PC-3 (cell line): ENCODE measurements at regions of chrX and their contacts with region 1.

Region 1: DNA sequence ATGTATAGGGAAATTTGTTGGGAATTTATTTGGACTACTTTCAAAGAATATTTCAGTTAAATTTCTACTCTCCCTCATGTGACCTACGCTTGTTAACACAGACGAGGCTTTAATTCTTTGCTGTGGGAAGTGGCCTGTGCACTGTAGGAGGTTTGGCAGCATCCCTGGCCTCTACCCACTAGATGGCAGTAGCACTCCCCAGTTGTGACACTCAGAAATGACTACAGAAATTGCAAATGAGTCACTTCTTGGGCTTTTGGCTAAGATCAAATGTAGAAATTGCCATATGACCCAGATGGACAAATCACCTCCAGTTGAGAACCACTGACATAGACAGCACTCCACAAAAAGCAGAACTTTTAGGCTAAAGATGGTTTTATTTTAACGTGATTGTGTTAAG is 22.1 kb downstream of the PIR start:
- DNase-seq: peak; percentile 77
- ATAC-seq: peak; percentile 76
- H3K4me3 ChIP-seq: no peak overlapping the region
- H3K27ac ChIP-seq: peak overlapping the region; percentile 9; the same call in 1 of the 2 replicates
- H3K4me1 ChIP-seq: peaks cover 30% of the 10 kb centered on the region
- H3K27me3 ChIP-seq: no peaks in the 10 kb centered on the region
- CTCF ChIP-seq: peak; percentile 80

Region 2: GRCh38 chrX:15299941-15300851 is 170.8 kb before region 1 on chrX:
- CTCF ChIA-PET with region 1: no interaction called
- POLR2A ChIA-PET with region 1: no interaction called
- intact Hi-C with region 1: loop called (anchors 1 kb)
- DNase-seq: peak; percentile 58
- ATAC-seq: no peak; the same call in 1 of the 2 replicates
- H3K4me3 ChIP-seq: no peak overlapping the region
- H3K27ac ChIP-seq: no peak overlapping the region
- H3K4me1 ChIP-seq: no peaks in the 10 kb centered on the region
- H3K27me3 ChIP-seq: no peaks in the 10 kb centered on the region
- CTCF ChIP-seq: peak; percentile 71

Region 3: DNA sequence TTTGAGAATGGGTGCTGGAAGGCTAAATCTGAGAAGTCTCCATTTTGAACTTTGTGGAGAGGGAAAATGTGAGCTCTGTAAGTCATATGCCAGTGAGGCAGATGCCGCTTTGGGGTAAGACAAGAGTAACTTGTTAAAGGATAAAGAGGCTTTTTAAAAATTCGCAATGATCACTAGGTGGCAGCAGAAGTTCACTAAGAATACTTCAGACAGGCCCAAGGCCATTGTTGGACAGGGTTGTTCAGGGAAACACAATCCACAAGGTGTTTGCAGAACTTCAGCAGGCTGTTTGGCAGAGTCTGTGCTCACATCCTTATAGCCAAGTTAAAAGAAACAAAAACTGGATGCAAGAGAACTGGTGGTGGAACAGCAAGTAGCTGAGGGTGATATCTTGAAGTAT is 122.0 kb before region 1 on chrX:
- CTCF ChIA-PET with region 1: no interaction called
- POLR2A ChIA-PET with region 1: no interaction called
- intact Hi-C with region 1: loop called (anchors 1 kb)
- DNase-seq: peak; percentile 83
- ATAC-seq: peak; percentile 81
- H3K4me3 ChIP-seq: no peak overlapping the region
- H3K27ac ChIP-seq: no peak overlapping the region
- H3K4me1 ChIP-seq: no peaks in the 10 kb centered on the region
- H3K27me3 ChIP-seq: no peaks in the 10 kb centered on the region
- CTCF ChIP-seq: peak; percentile 69

Region 4: DNA sequence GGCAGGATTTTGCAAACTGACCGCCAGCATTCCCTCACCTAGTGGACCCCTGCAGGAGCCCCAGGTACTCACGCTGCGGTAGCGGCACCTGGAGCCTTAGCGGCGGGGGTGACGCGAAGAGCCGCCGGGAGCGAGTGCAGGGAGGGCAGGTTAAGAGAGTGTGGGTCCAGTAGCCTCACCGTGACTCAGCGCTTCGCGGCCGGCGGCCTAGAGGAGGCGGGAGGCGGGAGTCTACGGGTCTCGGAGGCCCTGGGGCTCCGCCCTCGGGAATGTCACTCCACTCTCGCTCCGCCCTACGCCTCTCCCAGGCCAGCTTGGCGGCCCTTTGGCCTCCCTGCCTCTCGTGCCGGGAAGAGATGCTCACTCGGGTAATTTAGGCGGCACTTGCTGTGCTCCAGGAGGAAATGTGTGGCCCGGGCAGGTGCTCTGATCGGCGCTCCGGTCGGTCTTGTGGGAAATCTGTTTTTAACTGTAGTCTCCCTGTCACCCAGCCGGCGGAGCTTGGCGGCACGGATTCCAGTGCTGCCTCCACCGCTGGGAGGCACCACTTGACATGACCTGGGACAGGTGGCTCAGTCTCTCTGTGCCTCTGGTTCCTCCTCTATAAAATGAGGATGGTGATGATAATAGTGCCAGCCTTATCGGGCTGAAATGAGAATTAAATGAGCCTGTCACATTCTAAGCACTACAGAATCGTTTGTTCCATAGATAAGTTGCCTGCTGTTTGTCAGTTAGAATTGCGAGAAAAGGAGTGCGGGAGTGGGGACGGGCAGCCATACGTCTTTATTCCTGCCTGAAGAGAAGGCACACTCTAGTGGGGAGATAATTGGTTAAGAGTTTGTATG is 22.3 kb after region 1 on chrX and contains the start of gene PIR:
- CTCF ChIA-PET with region 1: interaction called, 8 read pairs
- POLR2A ChIA-PET with region 1: interaction called, 13 read pairs
- intact Hi-C with region 1: loop called (anchors 1 kb)
- DNase-seq: peak; percentile 92
- ATAC-seq: peak; percentile 99
- H3K4me3 ChIP-seq: peak within 1 kb of the TSS; percentile 84
- H3K27ac ChIP-seq: peak within 1 kb of the TSS; percentile 81
- H3K4me1 ChIP-seq: peaks cover 16% of the 10 kb centered on the region
- H3K27me3 ChIP-seq: no peaks in the 10 kb centered on the region
- CTCF ChIP-seq: peak; percentile 70
- total RNA-seq, gene PIR: 48.6 and 50.8 TPM in 2 replicates

Region 5: DNA sequence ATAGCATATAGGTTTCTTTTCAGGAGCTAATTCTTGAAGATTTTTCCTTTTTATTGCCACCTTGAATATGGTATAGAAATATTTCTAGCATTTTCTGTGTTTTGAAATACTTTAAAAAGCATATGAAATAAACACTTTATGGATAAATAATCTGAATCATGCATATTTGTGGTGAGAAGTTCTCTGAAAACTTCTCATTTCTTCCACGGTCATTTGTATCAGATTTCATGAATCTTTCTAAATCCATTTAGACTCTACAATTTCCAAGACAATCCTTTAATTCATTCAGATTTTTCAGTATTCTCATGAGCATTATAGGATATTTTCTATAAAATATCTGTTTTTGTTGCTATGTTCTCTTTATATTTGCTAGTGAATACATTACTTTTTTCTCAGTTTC is 250.9 kb after region 1 on chrX:
- CTCF ChIA-PET with region 1: interaction called, 10 read pairs
- POLR2A ChIA-PET with region 1: no interaction called
- intact Hi-C with region 1: no loop called
- DNase-seq: no peak
- ATAC-seq: no peak
- H3K4me3 ChIP-seq: no peak overlapping the region
- H3K27ac ChIP-seq: no peak overlapping the region
- H3K4me1 ChIP-seq: peaks cover 6% of the 10 kb centered on the region; the same call in 1 of the 2 replicates
- H3K27me3 ChIP-seq: no peaks in the 10 kb centered on the region
- CTCF ChIP-seq: no peak

Region 6: GRCh38 chrX:15890463-15890862 is 419.4 kb after region 1 on chrX:
- CTCF ChIA-PET with region 1: no interaction called
- POLR2A ChIA-PET with region 1: no interaction called
- intact Hi-C with region 1: no loop called
- DNase-seq: no peak
- ATAC-seq: no peak
- H3K4me3 ChIP-seq: no peak overlapping the region
- H3K27ac ChIP-seq: no peak overlapping the region
- H3K4me1 ChIP-seq: no peaks in the 10 kb centered on the region
- H3K27me3 ChIP-seq: no peaks in the 10 kb centered on the region
- CTCF ChIP-seq: no peak

Region 7: DNA sequence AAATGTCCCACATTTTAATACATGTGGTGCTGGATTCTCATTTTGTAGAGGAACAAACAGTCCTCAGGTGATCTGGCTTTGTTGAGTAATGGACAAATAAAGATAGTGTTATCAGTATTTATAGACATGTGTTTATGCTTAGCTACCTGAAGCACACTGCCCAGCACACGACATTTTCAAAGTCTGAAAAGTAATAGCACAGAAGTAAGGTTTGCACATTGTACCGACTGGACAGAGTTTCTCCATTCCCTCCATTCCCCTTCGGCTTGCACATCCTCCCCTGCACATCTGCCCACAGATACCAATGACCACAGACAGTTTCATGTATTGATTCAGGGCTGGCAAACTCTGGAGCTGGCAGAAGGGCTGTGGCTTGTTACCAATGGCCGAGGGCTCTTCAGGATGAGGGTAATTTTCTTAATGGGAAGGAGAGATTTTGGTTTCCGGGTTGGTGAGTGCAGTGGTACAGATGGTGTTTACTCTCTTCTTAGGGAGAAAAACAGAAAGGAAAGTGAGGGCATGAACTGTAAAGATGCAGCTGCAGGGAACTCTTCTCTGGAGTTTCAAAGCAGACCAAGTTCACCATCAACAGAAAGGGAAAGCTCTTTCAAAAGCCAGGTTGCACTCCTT is 654.6 kb after region 1 on chrX:
- CTCF ChIA-PET with region 1: no interaction called
- POLR2A ChIA-PET with region 1: no interaction called
- intact Hi-C with region 1: no loop called
- DNase-seq: peak; percentile 49
- ATAC-seq: peak; percentile 37
- H3K4me3 ChIP-seq: peak overlapping the region; percentile 81
- H3K27ac ChIP-seq: peak overlapping the region; percentile 37
- H3K4me1 ChIP-seq: peaks cover 15% of the 10 kb centered on the region
- H3K27me3 ChIP-seq: no peaks in the 10 kb centered on the region
- CTCF ChIP-seq: no peak